ENCODE measurements at regions of chr18 and their contacts with region 1.

Region 1: GRCh38 chr18:61643884-61644647 is 248.7 kb downstream of the RNF152 start:
- DNase-seq: no peak
- ATAC-seq: no peak
- H3K4me3 ChIP-seq: no peak overlapping the region
- H3K27ac ChIP-seq: no peak overlapping the region
- H3K4me1 ChIP-seq: peaks cover 0 to 24% (median under 1%) of the 10 kb centered on the region in 4 donors
- H3K27me3 ChIP-seq: no peaks in the 10 kb centered on the region
- CTCF ChIP-seq: no peak
- POLR2A ChIP-seq: no peak

Region 2: GRCh38 chr18:61589713-61590065 is 54.4 kb before region 1 on chr18:
- intact Hi-C with region 1: no loop called
- DNase-seq: no peak
- ATAC-seq: no peak
- H3K4me3 ChIP-seq: no peak overlapping the region
- H3K27ac ChIP-seq: no peak overlapping the region
- H3K4me1 ChIP-seq: peaks cover 0 to 9% (median 0%) of the 10 kb centered on the region in 4 donors
- H3K27me3 ChIP-seq: no peaks in the 10 kb centered on the region
- CTCF ChIP-seq: no peak
- POLR2A ChIP-seq: no peak

Region 3: DNA sequence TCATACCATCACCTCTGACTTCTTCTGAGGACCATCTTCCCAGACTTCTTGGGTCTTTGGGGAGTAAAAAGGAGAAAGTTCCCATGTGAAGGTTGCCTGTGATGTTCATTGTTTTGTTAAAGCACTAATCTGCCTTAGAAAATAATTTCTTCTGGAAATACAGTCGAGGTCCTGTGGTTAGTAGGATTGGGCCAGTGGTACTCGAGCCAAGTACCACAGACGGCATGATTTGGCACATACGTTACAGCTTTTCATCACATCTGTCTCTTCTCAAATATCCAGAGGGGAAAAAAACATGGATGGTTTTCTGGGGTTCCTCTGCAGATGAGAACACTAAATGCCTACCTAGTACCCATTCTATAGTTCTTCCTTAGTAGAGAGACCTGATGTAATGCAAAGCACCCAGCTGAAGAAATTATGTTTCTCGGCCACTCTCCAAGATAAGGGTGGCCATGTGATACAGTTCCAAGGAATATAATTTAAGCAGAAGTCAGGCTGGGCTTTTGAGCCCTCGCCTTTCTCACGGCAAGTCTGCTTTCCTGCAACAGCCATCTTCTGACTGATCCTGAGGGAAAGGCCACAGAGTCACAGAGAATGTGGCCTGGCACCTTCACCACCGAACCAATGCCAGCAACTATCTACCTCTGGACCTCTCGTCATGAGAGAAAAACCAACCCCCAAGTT is 87.8 kb after region 1 on chr18:
- intact Hi-C with region 1: loop called (anchors 5 to 10 kb)
- DNase-seq: no peak
- ATAC-seq: no peak
- H3K4me3 ChIP-seq: no peak overlapping the region
- H3K27ac ChIP-seq: peak overlapping the region; percentile 40 to 99 (median 98)
- H3K4me1 ChIP-seq: peaks cover 0 to 39% (median 17%) of the 10 kb centered on the region in 4 donors
- H3K27me3 ChIP-seq: no peaks in the 10 kb centered on the region
- CTCF ChIP-seq: no peak
- POLR2A ChIP-seq: no peak

Region 4: DNA sequence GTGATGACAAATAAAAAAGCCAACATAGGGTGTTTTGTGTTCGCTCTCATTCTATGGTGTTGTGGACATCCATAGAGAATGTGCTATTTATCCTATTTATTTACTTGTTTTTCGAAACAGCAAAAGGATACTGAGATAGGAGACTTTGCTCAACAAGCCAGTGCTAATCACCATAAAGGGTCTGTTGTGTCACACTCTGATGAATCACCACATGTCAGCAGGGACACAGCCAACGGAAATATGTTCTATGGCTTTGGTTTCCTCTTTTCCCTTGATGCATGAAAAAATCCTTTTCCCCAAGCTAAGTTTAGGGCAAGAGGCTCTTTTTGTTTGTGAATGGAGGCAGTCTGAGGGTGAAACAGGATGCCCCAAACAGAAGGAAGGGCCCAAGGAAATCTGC is 94.4 kb after region 1 on chr18:
- intact Hi-C with region 1: loop called (anchors 5 to 10 kb)
- DNase-seq: no peak
- ATAC-seq: peak in 1 of 4 donors; percentile 62
- H3K4me3 ChIP-seq: no peak overlapping the region
- H3K27ac ChIP-seq: peak overlapping the region; percentile 72 to 97 (median 89)
- H3K4me1 ChIP-seq: peaks cover 0 to 54% (median 25%) of the 10 kb centered on the region in 4 donors
- H3K27me3 ChIP-seq: no peaks in the 10 kb centered on the region
- CTCF ChIP-seq: no peak
- POLR2A ChIP-seq: no peak

Region 5: GRCh38 chr18:61771861-61772260 is 127.8 kb after region 1 on chr18:
- intact Hi-C with region 1: no loop called
- DNase-seq: no peak
- ATAC-seq: no peak
- H3K4me3 ChIP-seq: no peak overlapping the region
- H3K27ac ChIP-seq: no peak overlapping the region
- H3K4me1 ChIP-seq: peaks cover 0 to 10% (median 3%) of the 10 kb centered on the region in 4 donors
- H3K27me3 ChIP-seq: no peaks in the 10 kb centered on the region
- CTCF ChIP-seq: no peak
- POLR2A ChIP-seq: no peak